Activated CD4-positive, alpha-beta memory T cell treated with anti-CD3 and anti-CD28 coated beads, Interleukin-2, amount 10 ng/mL, durations not matched to agents 7 days and 5 days (primary cell): ENCODE measurements at regions of chr19 and their contacts with region 1.

Region 1: GRCh38 chr19:2610637-2611482 is 91.6 kb downstream of the GNG7 start:
- DNase-seq: peak; percentile 89
- H3K4me3 Mint-ChIP-seq: peak overlapping the region; percentile 77
- H3K27ac Mint-ChIP-seq: peak overlapping the region; percentile 42
- H3K4me1 Mint-ChIP-seq: peaks cover 39% of the 10 kb centered on the region
- H3K27me3 Mint-ChIP-seq: peaks cover 28% of the 10 kb centered on the region

Region 2: GRCh38 chr19:2427429-2428320 is 183.2 kb before region 1 on chr19 and contains the start of gene TIMM13:
- CTCF ChIA-PET with region 1: interaction called, 15 read pairs
- POLR2A ChIA-PET with region 1: interaction called, 4 read pairs
- DNase-seq: peak; percentile 97
- H3K4me3 Mint-ChIP-seq: peak within 1 kb of the TSS; percentile 84
- H3K27ac Mint-ChIP-seq: peak within 1 kb of the TSS; percentile 85
- H3K4me1 Mint-ChIP-seq: peaks cover 17% of the 10 kb centered on the region
- H3K27me3 Mint-ChIP-seq: no peaks in the 10 kb centered on the region
- total RNA-seq, gene TIMM13: 44.5 to 47.4 TPM

Region 3: DNA sequence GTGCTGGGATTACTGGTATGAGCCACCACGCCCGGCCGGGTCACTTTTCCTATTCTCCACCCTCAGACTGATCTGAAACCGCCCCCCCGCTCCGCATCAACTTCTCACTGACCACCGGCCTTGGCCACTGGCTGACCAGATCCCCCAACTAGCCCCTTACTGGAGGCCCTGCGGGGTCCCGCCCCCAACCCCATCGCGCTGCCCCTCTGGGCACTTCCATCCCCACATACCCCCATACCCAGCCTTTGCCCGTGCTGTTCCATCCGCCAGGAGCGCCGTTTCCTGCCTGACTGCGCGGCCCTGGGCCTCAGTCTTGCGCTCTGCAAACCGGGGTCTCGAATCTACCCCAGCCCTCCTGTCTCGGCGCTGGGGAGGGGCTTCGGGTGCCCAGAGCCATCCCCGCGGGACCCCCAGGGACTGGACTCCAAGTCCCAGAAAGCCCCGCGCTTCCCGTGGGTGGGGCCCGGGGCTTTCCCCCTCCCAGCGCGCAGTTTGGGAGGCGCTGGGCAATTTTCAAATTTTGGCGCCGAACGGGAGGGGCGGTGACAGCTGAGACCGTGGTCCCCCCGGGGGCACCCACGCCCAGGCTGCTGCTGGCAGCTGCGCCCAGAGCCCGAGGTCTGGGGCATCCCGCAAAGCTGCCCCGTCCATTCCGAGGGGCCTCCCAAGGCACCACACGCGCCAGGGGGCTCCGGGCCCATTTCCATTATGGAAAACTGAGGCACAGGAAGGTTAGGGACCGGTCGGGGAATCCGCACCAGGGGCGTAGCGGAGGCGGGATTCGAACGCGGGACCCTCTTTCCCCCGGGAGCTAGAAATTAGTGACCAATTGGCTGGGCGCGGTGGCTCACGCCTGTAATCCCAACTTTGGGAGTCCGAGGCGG is 148.9 kb before region 1 on chr19:
- CTCF ChIA-PET with region 1: interaction called, 24 read pairs
- POLR2A ChIA-PET with region 1: interaction called, 6 read pairs
- DNase-seq: peak; percentile 81
- H3K4me3 Mint-ChIP-seq: peak overlapping the region; percentile 95
- H3K27ac Mint-ChIP-seq: peak overlapping the region; percentile 86
- H3K4me1 Mint-ChIP-seq: peaks cover 23% of the 10 kb centered on the region
- H3K27me3 Mint-ChIP-seq: no peaks in the 10 kb centered on the region

Region 4: GRCh38 chr19:2524838-2525723 is 85.8 kb before region 1 on chr19:
- CTCF ChIA-PET with region 1: no interaction called
- POLR2A ChIA-PET with region 1: no interaction called
- DNase-seq: no peak
- H3K4me3 Mint-ChIP-seq: no peak overlapping the region
- H3K27ac Mint-ChIP-seq: no peak overlapping the region
- H3K4me1 Mint-ChIP-seq: no peaks in the 10 kb centered on the region
- H3K27me3 Mint-ChIP-seq: no peaks in the 10 kb centered on the region

Region 5: DNA sequence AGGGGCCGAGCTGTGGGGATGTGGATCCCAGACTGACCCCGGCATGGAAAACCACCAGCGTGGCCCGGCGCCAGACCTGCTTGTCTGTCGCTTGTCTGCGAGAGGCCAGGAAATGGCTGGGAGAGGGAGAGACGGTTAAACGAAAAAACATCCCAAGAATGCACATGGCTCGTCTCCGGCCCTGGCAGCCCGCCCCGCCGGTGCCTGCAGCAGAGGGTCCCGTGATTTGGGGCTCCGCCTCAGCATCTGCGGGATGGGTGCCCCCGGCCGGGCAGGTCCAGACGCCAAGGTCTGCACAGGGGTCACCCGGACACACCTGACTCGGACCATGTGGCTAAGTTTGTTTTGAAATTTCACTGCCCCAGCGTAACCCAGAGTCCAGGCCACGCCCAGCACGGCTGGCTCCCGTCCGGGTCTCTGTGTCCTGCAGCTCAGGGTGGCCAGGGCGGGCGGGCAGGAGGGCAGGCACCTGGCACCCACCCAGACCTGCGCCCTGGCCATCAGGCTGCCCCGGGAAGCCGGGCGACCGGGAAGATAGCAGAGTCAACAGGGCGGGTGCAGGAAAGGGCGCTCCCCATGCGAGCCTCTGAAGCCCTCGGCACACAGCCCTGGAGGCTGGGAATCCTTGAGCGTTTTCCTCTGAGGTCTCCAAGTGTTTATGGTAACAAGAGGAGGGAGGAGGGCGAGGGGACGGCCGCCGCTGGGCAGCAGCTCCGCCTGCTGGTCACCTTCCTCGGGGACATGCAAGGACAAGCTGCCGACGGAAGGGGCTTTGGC is 31.8 kb before region 1 on chr19:
- CTCF ChIA-PET with region 1: interaction called, 11 read pairs
- POLR2A ChIA-PET with region 1: no interaction called
- DNase-seq: peak; percentile 77
- H3K4me3 Mint-ChIP-seq: no peak overlapping the region
- H3K27ac Mint-ChIP-seq: no peak overlapping the region
- H3K4me1 Mint-ChIP-seq: peaks cover 3% of the 10 kb centered on the region
- H3K27me3 Mint-ChIP-seq: peaks cover 16% of the 10 kb centered on the region

Region 6: DNA sequence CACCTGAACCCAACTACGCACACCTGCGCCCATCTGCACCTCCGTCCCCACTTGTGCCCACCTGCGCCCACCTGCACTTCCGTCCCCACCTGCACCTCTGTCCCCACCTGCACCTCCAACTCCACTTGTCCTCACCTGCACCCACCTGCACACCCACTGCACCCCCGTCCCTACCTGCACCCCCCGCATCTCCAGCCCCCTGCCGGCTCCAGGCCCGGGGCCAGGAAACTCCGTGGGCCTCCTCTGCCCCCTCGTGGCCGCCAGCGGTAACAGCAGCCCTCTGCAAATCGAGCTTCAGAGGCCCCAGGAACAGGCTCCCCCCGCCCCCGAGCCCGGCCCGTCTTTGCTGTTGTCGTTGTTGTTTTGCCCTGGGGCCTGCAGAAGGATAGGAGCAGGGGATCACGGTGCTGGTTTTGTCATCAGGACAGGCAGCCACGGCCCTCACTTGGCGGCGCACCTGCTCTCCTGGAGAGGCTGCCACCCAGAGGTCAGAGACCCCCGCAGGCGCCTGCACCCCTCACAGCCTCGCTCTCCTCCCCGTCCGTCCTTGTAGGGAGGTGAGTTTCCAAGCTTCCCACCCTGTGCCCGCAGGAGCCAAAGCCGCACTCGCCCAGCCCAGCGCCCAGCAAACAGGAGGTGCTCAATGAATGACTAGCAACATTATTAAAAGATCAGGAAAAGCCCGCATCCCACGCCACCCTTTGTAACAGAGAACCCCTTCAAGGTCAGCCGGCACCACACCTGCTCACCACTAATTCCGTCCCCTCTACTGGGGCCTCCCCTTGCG is 26.2 kb after region 1 on chr19:
- CTCF ChIA-PET with region 1: interaction called, 12 read pairs
- POLR2A ChIA-PET with region 1: interaction called, 4 read pairs
- DNase-seq: peak; percentile 78
- H3K4me3 Mint-ChIP-seq: no peak overlapping the region
- H3K27ac Mint-ChIP-seq: no peak overlapping the region
- H3K4me1 Mint-ChIP-seq: peaks cover 2% of the 10 kb centered on the region
- H3K27me3 Mint-ChIP-seq: peaks cover 6% of the 10 kb centered on the region

Region 7: GRCh38 chr19:2775556-2776430 is 164.9 kb after region 1 on chr19:
- CTCF ChIA-PET with region 1: no interaction called
- POLR2A ChIA-PET with region 1: no interaction called
- DNase-seq: peak; percentile 79
- H3K4me3 Mint-ChIP-seq: peak overlapping the region; percentile 76
- H3K27ac Mint-ChIP-seq: peak overlapping the region; percentile 91
- H3K4me1 Mint-ChIP-seq: peaks cover 37% of the 10 kb centered on the region
- H3K27me3 Mint-ChIP-seq: no peaks in the 10 kb centered on the region